A673 (cell line): ENCODE measurements at regions of chr10 and their contacts with region 1.

Region 1: DNA sequence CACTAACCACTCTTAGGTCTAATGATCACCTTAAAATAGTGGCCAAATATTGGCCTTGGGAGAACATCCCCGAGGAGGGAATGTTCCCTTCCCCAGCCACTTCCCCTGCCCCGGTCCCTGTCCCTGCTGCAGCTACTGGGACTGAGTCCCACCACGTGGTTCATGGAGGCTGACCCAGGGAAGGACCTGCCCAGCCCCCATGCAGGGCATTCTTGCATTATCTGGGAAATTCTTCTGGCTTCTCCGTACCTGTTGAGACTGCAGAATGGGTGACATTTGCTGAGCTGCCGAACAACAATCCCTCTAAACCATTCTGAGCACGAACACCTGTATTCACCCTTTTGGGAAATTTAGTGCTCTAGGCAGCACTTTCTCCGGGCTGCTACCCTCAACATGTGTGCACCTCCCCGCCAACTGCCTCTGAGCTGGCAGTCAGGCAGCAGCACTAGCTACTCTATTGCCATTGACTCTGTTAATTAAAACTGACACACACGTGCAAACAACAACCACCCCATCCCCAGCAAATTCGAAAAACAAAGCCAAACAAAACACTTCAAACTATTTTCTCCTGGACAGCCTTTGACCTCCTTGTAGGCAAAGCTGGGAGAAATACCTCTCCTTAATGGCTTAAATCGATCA is 567.4 kb upstream of the MKI67 start:
- DNase-seq: no peak
- H3K4me3 ChIP-seq: no peak overlapping the region
- H3K27ac ChIP-seq: no peak overlapping the region
- H3K4me1 ChIP-seq: peaks cover 13% of the 10 kb centered on the region
- H3K27me3 ChIP-seq: peaks cover 30% of the 10 kb centered on the region
- CTCF ChIP-seq: no peak

Region 2: DNA sequence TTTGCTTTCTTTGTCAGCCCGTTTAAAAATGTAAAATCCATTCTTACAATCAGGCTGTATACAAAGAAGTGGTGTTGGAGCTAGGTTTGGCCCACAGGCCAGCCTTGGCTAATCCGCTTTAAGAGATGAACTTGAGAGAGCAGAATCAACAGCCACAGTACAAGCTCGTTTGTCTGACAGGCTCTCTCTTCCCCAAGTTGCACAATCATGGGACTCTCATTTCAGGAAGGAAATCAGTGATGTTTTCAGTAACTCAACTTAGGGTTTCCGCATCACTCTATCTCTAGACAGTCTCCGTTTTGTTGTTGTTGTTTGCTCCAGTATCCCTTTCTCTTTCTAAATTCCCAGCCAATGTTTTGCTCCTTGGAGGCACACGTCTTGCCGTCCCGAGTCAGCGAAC is 14.6 kb after region 1 on chr10:
- CTCF ChIA-PET with region 1: interaction called, 11 read pairs
- POLR2A ChIA-PET with region 1: no interaction called
- intact Hi-C with region 1: no loop called
- DNase-seq: no peak
- H3K4me3 ChIP-seq: no peak overlapping the region
- H3K27ac ChIP-seq: no peak overlapping the region
- H3K4me1 ChIP-seq: no peaks in the 10 kb centered on the region
- H3K27me3 ChIP-seq: peaks cover 16% of the 10 kb centered on the region
- CTCF ChIP-seq: no peak

Region 3: DNA sequence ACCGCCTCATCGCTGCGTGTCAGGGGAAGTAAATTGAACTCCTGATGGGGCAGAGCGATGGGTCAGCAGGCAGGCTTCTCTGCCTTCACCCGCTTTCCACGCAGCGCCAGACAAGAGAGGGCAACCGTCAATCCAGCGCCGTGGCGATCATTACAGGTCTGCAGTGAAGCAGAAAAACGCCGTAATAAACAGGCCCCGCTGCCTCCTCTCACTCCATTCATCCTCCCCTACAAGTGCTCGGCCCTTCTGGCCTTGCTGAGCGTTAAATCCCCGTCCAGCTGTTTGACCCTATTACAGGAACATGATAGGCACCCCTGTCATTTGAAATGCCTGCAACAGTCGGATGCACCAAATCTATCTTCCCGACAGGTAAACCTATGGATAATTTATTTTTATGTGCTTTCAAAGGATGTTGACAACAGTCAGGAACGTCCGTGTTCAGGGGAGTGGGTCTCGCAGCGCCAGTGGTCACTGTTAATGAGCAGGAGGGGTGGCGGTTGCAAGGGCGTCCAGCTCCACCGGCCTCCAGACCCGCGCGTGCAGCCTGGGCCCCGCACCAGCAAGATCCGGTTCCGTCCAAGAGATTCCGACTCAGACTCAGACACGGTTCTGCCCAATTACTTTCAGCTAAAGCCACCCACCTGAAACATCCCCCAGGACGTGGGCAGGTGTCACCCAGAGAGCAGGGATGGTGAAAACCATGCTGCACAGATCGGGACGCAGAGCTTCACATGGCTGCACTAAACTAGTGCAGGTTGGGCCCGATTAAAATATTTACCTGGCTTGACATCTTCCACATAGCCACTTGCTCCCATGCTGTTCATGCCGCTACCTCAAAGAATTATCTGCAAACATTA is 265.4 kb after region 1 on chr10:
- CTCF ChIA-PET with region 1: no interaction called
- POLR2A ChIA-PET with region 1: no interaction called
- intact Hi-C with region 1: no loop called
- DNase-seq: no peak
- H3K4me3 ChIP-seq: no peak overlapping the region
- H3K27ac ChIP-seq: no peak overlapping the region
- H3K4me1 ChIP-seq: no peaks in the 10 kb centered on the region
- H3K27me3 ChIP-seq: no peaks in the 10 kb centered on the region
- CTCF ChIP-seq: no peak